ENCODE measurements at regions of chr19 and their contacts with region 1.

Region 1: GRCh38 chr19:13003081-13003480 is 7.8 kb downstream of the NFIX start:
- DNase-seq: no peak
- ATAC-seq: no peak
- H3K4me3 ChIP-seq: no peak overlapping the region
- H3K27ac ChIP-seq: no peak overlapping the region
- H3K4me1 ChIP-seq: peaks cover 0 to 36% of the 10 kb centered on the region in 2 experiments; a peak in 2 of 5 replicates
- H3K27me3 ChIP-seq: no peaks in the 10 kb centered on the region
- CTCF ChIP-seq: no peak
- EP300 ChIP-seq: no peak
- POLR2A ChIP-seq: no peak
- RAD21 ChIP-seq: no peak

Region 2: DNA sequence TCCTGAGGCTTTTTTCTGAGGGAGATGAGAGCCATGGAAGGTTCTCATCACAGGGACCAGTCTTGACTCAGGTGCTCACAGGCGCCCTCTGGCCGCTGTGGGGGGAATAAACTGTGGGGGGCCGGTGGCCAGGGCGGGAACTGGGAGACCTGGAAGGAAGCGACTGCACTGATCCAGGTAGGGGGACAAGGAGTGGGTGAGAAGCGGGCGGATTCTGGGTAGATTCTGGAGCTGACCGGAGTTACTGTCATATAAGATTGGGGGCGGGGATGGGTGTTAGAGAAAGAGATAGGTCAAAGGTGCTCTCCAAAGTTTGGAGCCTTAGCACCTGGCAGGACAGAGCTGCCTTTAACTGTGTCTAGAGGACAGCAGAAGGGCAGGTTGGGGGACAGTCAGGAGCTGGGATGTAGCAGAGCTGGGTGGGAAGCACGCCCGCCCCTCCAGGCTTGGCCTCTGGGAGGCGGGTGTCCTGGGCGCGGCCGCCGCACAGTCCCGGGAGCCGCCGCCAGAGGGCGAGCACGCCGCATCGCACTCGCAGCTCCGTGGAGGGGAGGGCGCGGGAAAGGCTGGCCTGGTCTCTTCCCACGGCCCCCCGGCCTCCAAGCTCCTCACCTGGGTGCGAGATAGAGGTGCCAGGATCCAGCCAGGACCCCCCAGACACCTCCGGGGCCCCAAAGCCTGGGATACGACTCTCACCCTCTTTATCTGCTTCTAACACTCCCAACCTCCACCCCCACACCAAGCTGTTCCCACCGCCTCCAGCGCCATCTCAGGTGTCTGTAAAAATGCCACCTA is 37.9 kb before region 1 on chr19:
- CTCF ChIA-PET with region 1: no interaction called
- POLR2A ChIA-PET with region 1: no interaction called
- in situ Hi-C with region 1: no loop called
- intact Hi-C with region 1: no loop called
- DNase-seq: peak; percentile 85 to 93 (median 86)
- ATAC-seq: peak; percentile 98
- H3K4me3 ChIP-seq: peak overlapping the region; percentile 64
- H3K27ac ChIP-seq: peak overlapping the region; percentile 92
- H3K4me1 ChIP-seq: peaks cover 9 to 24% of the 10 kb centered on the region in 2 experiments; a peak in 4 of 5 replicates
- H3K27me3 ChIP-seq: no peaks in the 10 kb centered on the region
- CTCF ChIP-seq: peak; percentile 88 to 99 (median 98)
- EP300 ChIP-seq: no peak
- POLR2A ChIP-seq: peak; percentile 48; the same call in 1 of the 2 replicates
- RAD21 ChIP-seq: peak; percentile 69 to 83; a peak in 3 of 4 replicates

Region 3: DNA sequence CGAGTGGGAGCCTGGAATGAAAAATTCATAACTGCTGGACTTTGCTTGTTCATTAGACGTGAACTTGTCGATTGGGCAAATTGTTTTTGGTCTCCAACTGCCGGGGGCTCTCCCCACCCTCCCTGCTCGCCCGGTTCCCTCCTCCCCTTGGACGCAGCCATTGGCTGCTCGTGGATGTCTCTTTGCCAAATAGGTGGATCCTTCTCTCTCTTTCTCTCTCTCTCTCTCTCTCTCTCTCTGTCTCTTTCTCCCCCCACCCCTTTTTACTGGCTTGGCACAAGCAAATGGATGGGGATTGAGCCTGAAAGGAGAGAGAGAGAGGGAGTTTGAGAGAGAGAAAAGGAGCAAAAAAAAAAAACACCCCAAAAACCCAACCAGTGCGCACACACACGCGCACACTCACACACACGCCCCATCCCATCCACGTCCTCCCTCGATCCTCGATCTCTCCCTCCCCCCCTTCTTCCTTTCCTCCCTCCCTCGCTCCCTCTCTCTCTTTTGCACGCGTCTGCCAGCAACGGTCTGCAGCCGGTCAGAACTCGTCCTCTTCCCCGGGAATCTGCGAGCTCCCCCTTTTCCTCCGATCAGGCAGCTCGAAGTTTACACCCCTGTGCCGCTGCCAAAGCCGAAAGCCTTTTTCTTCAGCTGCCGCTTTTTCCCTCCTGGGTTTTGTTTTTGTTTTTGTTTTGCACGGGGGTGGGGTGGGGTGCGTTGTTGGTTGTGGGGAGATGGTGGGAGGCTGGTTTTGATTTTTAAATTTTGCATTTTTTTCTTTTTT is 20.0 kb after region 1 on chr19:
- CTCF ChIA-PET with region 1: no interaction called
- POLR2A ChIA-PET with region 1: interaction called, 10 read pairs
- in situ Hi-C with region 1: no loop called
- intact Hi-C with region 1: no loop called
- DNase-seq: peak; percentile 68 to 76 (median 72)
- ATAC-seq: peak; percentile 79
- H3K4me3 ChIP-seq: peak overlapping the region; percentile 41
- H3K27ac ChIP-seq: peak overlapping the region; percentile 62
- H3K4me1 ChIP-seq: peaks cover 22 to 40% of the 10 kb centered on the region in 2 experiments; a peak in 4 of 5 replicates
- H3K27me3 ChIP-seq: no peaks in the 10 kb centered on the region
- CTCF ChIP-seq: no peak
- EP300 ChIP-seq: peak; percentile 39; the same call in 1 of the 2 replicates
- POLR2A ChIP-seq: no peak; the same call in 1 of the 2 replicates
- RAD21 ChIP-seq: no peak

Region 4: GRCh38 chr19:13234518-13234917 is 231.4 kb after region 1 on chr19:
- CTCF ChIA-PET with region 1: no interaction called
- POLR2A ChIA-PET with region 1: no interaction called
- in situ Hi-C with region 1: no loop called
- intact Hi-C with region 1: no loop called
- DNase-seq: peak; percentile 88 to 92 (median 92)
- ATAC-seq: peak; percentile 99
- H3K4me3 ChIP-seq: no peak overlapping the region
- H3K27ac ChIP-seq: no peak overlapping the region
- H3K4me1 ChIP-seq: peaks cover 6 to 19% of the 10 kb centered on the region in 2 experiments; a peak in 4 of 5 replicates
- H3K27me3 ChIP-seq: peaks cover 0 to 40% of the 10 kb centered on the region in 2 experiments; a peak in 3 of 5 replicates
- CTCF ChIP-seq: peak; percentile 95 to 99 (median 98)
- EP300 ChIP-seq: no peak
- POLR2A ChIP-seq: no peak
- RAD21 ChIP-seq: peak; percentile 32 to 70